Posterior vena cava (tissue), 2 donors: ENCODE measurements at regions of chr4 and their contacts with region 1.

Region 1: GRCh38 chr4:185343726-185344581 is 51.8 kb downstream of the LRP2BP start:
- DNase-seq: no peak

Region 2: GRCh38 chr4:185210102-185210981 is 133.6 kb before region 1 on chr4:
- intact Hi-C with region 1: loop called in 1 of 2 experiments (anchors 10 kb)
- DNase-seq: peak; percentile 89